Body of pancreas (tissue), 4 donors: ENCODE measurements at regions of chr21 and their contacts with region 1.

Region 1: DNA sequence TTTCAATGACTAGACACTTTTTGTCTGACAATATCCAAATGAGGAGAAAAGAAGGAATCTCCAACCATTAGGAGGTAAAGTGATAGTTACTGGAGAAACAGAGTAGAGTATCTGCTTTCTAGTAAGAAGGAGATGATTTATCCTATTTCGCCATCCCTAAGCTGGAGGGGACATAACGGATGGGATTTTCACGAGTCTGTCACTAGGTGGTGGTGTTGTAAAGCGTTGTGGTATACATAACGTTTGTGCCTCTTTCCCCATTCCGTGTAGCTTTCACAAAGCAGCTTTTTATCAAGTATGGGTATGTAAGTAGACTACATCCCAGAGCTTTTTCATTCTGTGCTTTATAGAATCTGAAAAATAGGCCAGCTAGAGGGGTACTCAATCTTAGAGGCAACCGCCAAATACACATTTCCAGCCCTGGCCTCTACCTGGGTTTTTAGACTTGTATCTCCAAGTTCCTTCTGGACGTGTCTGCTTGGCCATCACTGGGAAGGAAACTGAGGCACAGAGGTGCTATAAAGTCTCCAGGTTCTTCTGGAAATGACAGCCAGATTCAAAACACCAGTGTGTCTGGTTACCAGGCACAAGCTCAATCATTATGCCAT is 33.3 kb upstream of the FAM3B start:
- DNase-seq: peak; percentile 65 to 80 (median 68)
- ATAC-seq: peak; percentile 92
- H3K4me3 ChIP-seq: no peak overlapping the region
- H3K27ac ChIP-seq: no peak overlapping the region
- H3K4me1 ChIP-seq: no peaks in the 10 kb centered on the region
- H3K27me3 ChIP-seq: no peaks in the 10 kb centered on the region
- CTCF ChIP-seq: peak; percentile 37 to 95 (median 93)
- POLR2A ChIP-seq: no peak

Region 2: DNA sequence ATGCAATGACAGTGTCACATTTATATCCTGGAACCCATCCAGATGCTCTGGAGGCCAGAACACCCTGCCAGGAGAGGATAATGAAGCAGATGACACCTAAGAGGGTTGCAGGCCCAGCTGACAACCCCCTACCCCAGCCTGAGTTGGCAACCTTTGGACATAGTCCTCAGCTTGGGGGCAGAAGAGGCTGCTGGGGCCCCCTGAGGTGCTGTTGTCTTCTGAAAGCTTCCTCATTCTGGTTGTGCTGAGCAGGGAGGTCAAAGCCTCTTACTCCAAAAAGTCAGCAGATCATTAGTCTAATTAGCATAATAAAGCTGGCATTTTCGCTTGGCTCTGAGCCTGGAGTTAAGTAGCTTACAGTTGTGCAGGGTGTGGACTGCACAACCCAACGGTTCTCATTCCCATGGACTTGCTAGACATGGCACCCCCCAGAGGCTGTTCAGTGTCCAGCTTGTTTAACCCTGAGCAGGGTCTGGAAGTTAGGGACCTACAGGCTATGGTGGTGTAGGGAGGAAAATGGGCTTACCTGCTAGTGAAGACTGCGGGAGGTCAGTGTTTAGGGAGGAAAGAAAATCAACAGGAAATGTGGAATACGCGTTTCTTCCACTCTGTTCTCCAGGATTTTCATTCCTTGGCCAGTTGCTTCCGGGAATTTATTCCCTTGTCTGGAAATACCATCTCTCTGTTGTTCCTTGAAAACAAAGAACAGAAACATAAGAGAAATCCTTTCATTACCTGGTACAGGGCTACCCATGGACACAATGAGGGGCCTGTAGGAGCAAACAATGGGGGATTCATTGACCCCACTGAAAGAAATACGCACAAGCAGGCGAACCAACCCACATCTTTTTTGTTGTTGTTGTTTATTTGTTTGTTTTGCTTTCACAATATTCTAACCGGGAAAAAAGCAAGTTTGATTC is 135.6 kb before region 1 on chr21:
- intact Hi-C with region 1: no loop called
- DNase-seq: no peak
- ATAC-seq: no peak
- H3K4me3 ChIP-seq: no peak overlapping the region
- H3K27ac ChIP-seq: no peak overlapping the region
- H3K4me1 ChIP-seq: no peaks in the 10 kb centered on the region
- H3K27me3 ChIP-seq: no peaks in the 10 kb centered on the region
- CTCF ChIP-seq: no peak
- POLR2A ChIP-seq: no peak

Region 3: GRCh38 chr21:41460578-41461527 is 177.5 kb after region 1 on chr21:
- intact Hi-C with region 1: loop called (anchors 5 kb)
- DNase-seq: peak; percentile 78 to 84 (median 82)
- ATAC-seq: peak; percentile 90
- H3K4me3 ChIP-seq: no peak overlapping the region
- H3K27ac ChIP-seq: peak overlapping the region in 1 of 4 donors; percentile 20
- H3K4me1 ChIP-seq: peaks cover 6% of the 10 kb centered on the region
- H3K27me3 ChIP-seq: no peaks in the 10 kb centered on the region
- CTCF ChIP-seq: peak; percentile 54 to 90 (median 80)
- POLR2A ChIP-seq: peak in 1 of 3 donors; percentile 5